K562 (cell line): ENCODE measurements at regions of chr1 and their contacts with region 1.

Region 1: DNA sequence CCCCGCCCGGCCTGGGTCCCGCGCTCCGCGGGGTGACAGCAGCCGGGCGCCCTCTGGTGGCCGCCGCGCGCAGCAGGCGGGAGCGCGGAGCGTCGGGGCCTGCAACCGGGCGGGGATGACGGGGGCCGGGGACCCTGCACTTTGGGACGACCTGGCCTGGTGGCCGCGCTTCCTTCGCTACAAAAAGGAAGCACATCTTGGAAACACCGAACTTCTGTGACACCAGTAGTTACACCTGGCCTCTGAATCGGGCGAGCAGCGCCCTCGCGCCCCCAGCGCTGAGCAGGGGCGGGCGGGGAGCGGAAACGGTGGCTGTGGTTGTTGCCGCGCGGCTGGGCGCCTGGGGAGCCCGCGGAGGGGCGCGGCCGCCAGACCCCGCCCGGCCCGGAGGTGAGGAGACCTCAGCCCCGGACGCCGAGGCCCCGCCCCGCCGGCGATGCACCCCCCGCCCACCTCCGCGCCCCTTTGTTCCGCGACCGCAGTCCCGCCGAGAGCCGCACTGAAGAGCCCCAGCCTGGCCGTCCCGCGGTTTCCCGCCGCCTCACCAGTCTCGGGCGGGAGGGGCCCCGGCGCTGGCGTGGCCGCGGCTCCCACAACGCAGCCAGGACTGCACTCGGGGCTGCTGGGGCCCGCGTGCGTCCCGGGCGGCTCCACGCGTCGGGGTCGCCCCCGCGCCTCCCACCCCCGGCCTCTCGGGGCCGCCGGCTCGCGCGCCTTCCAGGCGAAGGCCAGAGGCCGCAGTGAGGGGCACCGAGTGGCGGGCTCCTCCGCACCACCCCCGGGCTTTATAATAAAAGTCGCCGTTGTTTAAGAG is 59.3 kb downstream of the H3-3A start:
- DNase-seq: peak; percentile 89 to 97 (median 96)
- ATAC-seq: peak; percentile 89
- H3K4me3 ChIP-seq: peak overlapping the region; percentile 56
- H3K27ac ChIP-seq: peak overlapping the region; percentile 83
- H3K4me1 ChIP-seq: peaks cover 10 to 39% of the 10 kb centered on the region in 2 experiments; a peak in 3 of 5 replicates
- H3K27me3 ChIP-seq: no peaks in the 10 kb centered on the region
- CTCF ChIP-seq: peak; percentile 84 to 93 (median 87)
- EP300 ChIP-seq: no peak; the same call in 1 of the 2 replicates
- POLR2A ChIP-seq: peak; percentile 63; the same call in 1 of the 2 replicates
- RAD21 ChIP-seq: peak; percentile 92 to 99

Region 2: GRCh38 chr1:225881969-225882693 is 239.7 kb before region 1 on chr1 and contains the start of gene TMEM63A:
- CTCF ChIA-PET with region 1: no interaction called
- POLR2A ChIA-PET with region 1: no interaction called
- in situ Hi-C with region 1: no loop called
- intact Hi-C with region 1: loop called (anchors 5 kb)
- DNase-seq: peak; percentile 95 to 97 (median 97)
- ATAC-seq: peak; percentile 90
- H3K4me3 ChIP-seq: peak within 1 kb of the TSS; percentile 87
- H3K27ac ChIP-seq: peak within 1 kb of the TSS; percentile 88
- H3K4me1 ChIP-seq: peaks cover 23 to 56% of the 10 kb centered on the region in 2 experiments; a peak in 4 of 5 replicates
- H3K27me3 ChIP-seq: no peaks in the 10 kb centered on the region
- CTCF ChIP-seq: peak; percentile 52 to 78 (median 55); a peak in 5 of 6 replicates
- EP300 ChIP-seq: no peak
- POLR2A ChIP-seq: peak; percentile 87
- RAD21 ChIP-seq: peak; percentile 33 to 44; a peak in 3 of 4 replicates
- polyA plus RNA-seq, gene TMEM63A: 2.0 to 2.8 TPM

Region 3: DNA sequence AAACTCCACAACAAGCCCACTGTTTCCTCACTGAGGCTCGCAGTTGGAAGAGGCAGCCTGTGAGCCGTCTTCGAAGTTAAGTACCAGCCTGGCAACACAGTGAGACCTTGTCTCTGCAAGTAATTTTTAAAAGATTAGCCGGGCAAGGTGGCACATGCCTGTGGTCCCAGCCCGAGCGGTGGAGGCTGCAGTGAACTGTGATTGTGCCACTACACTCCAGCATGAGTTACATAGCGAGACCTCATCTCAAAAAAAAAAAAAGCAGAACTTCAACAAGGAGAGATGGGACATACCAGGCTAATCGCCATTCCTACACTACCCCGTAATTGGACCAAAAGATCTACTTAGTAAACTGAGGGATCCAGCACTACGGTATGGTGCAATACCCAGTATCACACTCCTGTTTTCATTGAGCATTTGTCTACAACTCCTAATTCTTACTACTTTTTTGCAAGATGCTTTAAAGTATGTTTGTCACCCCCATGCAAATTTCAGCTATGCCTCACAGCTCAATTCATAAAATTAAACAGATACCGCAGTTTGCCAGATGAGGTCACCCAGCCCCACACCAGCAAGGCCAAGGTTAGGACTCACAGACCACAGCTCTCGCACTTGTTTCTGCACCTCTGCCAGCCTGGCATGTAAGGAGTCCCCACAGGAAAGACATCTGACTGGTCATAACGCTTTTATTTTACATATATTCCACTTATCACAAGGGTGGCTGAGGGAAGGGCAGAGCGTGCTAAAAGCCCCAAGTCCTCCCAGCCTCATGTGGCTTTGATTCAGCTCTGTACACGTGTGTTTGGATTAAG is 143.7 kb before region 1 on chr1:
- CTCF ChIA-PET with region 1: no interaction called
- POLR2A ChIA-PET with region 1: no interaction called
- in situ Hi-C with region 1: no loop called
- intact Hi-C with region 1: loop called (anchors 5 kb)
- DNase-seq: peak in 1 of 4 experiments; percentile 35
- ATAC-seq: peak; percentile 19
- H3K4me3 ChIP-seq: no peak overlapping the region
- H3K27ac ChIP-seq: no peak overlapping the region
- H3K4me1 ChIP-seq: peaks cover 1 to 7% of the 10 kb centered on the region in 2 experiments; a peak in 4 of 5 replicates
- H3K27me3 ChIP-seq: no peaks in the 10 kb centered on the region
- CTCF ChIP-seq: peak in 2 of 3 experiments; percentile 25 to 33; a peak in 1 of 6 replicates
- EP300 ChIP-seq: no peak
- POLR2A ChIP-seq: 0 out of 2 replicates have a peak, but pooled peaks have one; percentile 15
- RAD21 ChIP-seq: peak in 1 of 2 experiments; percentile 39; a peak in 2 of 4 replicates

Region 4: GRCh38 chr1:226078374-226078773 is 43.4 kb before region 1 on chr1:
- CTCF ChIA-PET with region 1: interaction called, 3 read pairs
- POLR2A ChIA-PET with region 1: interaction called, 5 read pairs
- in situ Hi-C with region 1: loop called (anchors 5 kb)
- intact Hi-C with region 1: no loop called
- DNase-seq: no peak
- ATAC-seq: no peak
- H3K4me3 ChIP-seq: no peak overlapping the region
- H3K27ac ChIP-seq: no peak overlapping the region
- H3K4me1 ChIP-seq: peaks cover 4 to 8% of the 10 kb centered on the region in 2 experiments; a peak in 4 of 5 replicates
- H3K27me3 ChIP-seq: no peaks in the 10 kb centered on the region
- CTCF ChIP-seq: no peak
- EP300 ChIP-seq: no peak
- POLR2A ChIP-seq: no peak
- RAD21 ChIP-seq: no peak

Region 5: GRCh38 chr1:226223786-226224244 is 102.0 kb after region 1 on chr1:
- CTCF ChIA-PET with region 1: no interaction called
- POLR2A ChIA-PET with region 1: no interaction called
- in situ Hi-C with region 1: no loop called
- intact Hi-C with region 1: no loop called
- DNase-seq: peak in 3 of 4 experiments; percentile 41 to 48 (median 46)
- ATAC-seq: peak; percentile 73
- H3K4me3 ChIP-seq: peak overlapping the region; percentile 37
- H3K27ac ChIP-seq: no peak overlapping the region
- H3K4me1 ChIP-seq: peaks cover 4 to 12% of the 10 kb centered on the region in 2 experiments; a peak in 4 of 5 replicates
- H3K27me3 ChIP-seq: 0 out of 5 replicates have a peak, but pooled peaks cover 0 to 4% of the 10 kb centered on the region in 2 experiments
- CTCF ChIP-seq: peak in 2 of 3 experiments; percentile 10 to 20; a peak in 2 of 6 replicates
- EP300 ChIP-seq: no peak
- POLR2A ChIP-seq: no peak
- RAD21 ChIP-seq: no peak

Region 6: GRCh38 chr1:226332947-226333346 is 211.2 kb after region 1 on chr1:
- CTCF ChIA-PET with region 1: interaction called, 7 read pairs
- POLR2A ChIA-PET with region 1: no interaction called
- in situ Hi-C with region 1: no loop called
- intact Hi-C with region 1: loop called (anchors 2 kb)
- DNase-seq: no peak
- ATAC-seq: no peak
- H3K4me3 ChIP-seq: no peak overlapping the region
- H3K27ac ChIP-seq: no peak overlapping the region
- H3K4me1 ChIP-seq: no peaks in the 10 kb centered on the region; a peak in 2 of 5 replicates
- H3K27me3 ChIP-seq: no peaks in the 10 kb centered on the region
- CTCF ChIP-seq: no peak
- EP300 ChIP-seq: no peak
- POLR2A ChIP-seq: no peak
- RAD21 ChIP-seq: no peak

Region 7: DNA sequence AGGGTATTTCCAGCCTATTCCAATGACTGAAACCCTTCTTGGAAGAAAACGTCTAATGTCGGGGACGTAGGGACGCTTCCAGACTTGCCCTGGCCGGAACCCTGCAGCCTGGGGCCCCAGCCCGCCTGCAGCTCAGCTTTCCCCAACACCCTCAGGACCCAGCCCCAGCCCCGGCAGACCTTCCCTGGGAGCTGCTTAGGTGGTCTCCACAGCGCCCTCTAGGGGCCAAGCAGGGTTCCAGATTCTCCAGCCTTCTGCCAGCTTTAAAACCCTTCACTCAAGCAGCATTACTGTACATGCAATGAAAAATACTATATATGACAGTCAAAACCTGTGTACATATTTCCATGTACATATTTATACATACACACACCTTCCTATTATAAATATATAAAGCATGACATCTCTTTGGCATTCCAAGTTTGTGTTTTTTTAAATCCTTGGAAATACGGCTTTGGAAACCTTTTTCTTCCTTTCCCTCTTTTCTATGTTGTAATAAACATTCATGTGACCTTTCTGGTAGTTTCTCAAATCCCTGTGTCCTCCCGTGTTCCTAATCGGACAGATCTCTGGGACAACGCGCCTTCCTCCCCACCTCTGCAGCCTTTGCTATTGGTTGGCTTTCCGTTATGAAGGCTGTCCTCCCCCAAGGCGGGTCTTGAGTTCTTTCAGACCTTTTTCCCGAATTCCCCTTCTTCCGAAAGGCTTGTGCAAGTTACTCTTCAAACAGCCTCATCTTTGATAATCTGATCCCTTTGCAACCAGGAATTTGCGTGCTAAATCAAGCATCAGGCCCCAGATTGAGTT is 487.1 kb after region 1 on chr1:
- CTCF ChIA-PET with region 1: no interaction called
- POLR2A ChIA-PET with region 1: no interaction called
- in situ Hi-C with region 1: no loop called
- intact Hi-C with region 1: loop called (anchors 10 kb)
- DNase-seq: peak; percentile 81 to 93 (median 88)
- ATAC-seq: peak; percentile 94
- H3K4me3 ChIP-seq: no peak overlapping the region
- H3K27ac ChIP-seq: no peak overlapping the region
- H3K4me1 ChIP-seq: no peaks in the 10 kb centered on the region
- H3K27me3 ChIP-seq: peaks cover 38 to 69% of the 10 kb centered on the region in 2 experiments
- CTCF ChIP-seq: peak; percentile 83 to 93 (median 91)
- EP300 ChIP-seq: no peak
- POLR2A ChIP-seq: no peak
- RAD21 ChIP-seq: peak; percentile 58 to 66